ENCODE measurements at regions of chr21 and their contacts with region 1.

Region 1: DNA sequence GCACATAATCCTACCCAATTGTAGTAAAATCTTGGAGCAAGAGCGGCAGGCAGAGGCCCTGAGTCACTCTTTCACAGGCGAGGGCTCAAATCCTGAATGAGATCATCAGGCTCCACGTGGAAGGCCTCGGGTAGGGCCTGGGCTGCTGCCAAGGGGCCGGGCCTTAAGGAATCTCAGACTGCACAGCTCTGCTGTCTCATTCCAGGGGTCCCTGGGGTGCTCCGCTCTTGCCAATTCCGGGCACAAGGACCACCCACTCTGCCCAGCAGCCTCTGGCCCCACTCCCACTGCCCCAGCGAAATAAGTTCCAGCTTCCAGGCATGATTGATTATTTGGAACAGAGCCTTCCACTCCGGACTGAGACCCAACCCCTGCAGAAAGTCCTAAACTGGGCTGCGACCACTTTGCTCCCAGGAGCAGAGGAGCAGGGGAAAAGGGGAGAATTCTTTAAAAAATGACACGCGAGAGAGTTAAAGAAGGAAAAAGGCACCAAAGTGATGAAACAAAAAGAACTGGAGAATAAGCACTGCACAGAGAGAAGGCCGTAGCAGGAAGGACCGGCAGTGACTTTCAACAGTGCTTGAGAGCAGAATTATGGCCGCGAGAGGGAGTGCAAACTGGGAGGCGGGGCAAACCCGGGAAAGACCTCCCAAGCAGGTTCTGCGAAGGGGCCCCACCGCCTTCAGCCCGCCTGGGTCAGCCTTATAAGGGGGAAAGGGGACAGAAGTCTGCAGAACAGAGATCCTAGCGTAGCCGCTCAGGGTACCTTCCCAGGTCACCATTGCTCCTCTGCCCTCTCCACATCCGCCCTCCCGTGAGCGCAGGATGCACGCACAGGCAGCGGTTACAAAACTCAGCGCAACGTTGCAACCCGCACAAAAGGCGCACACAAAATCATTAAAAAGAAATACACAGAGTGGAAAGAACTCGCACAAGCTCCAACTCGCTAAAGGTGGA is 2.0 kb downstream of the ADAMTS1 start:
- DNase-seq: peak in 5 of 9 donors; percentile 16 to 55 (median 28)
- ATAC-seq: peak; percentile 62
- H3K4me3 ChIP-seq: peak overlapping the region; percentile 32
- H3K4me3 Mint-ChIP-seq: peak overlapping the region; percentile 75 to 89 (median 82)
- H3K27ac ChIP-seq: no peak overlapping the region
- H3K27ac Mint-ChIP-seq: peak overlapping the region in 3 of 9 donors; percentile 60 to 84 (median 69)
- H3K4me1 ChIP-seq: peaks cover 3 to 11% of the 10 kb centered on the region in 2 donors
- H3K4me1 Mint-ChIP-seq: peaks cover 32 to 49% (median 41%) of the 10 kb centered on the region in 7 donors
- H3K27me3 ChIP-seq: peaks cover 0 to 9% of the 10 kb centered on the region in 2 donors
- H3K27me3 Mint-ChIP-seq: peaks cover 66 to 87% (median 75%) of the 10 kb centered on the region in 5 donors

Region 2: GRCh38 chr21:26769613-26770188 is 73.6 kb before region 1 on chr21:
- CTCF ChIA-PET with region 1: no interaction called
- POLR2A ChIA-PET with region 1: no interaction called
- intact Hi-C with region 1: loop called in 1 of 2 experiments (anchors 2 kb)
- DNase-seq: peak in 2 of 9 donors; percentile 3 to 28
- ATAC-seq: no peak
- H3K4me3 ChIP-seq: no peak overlapping the region
- H3K4me3 Mint-ChIP-seq: no peak overlapping the region
- H3K27ac ChIP-seq: no peak overlapping the region
- H3K27ac Mint-ChIP-seq: no peak overlapping the region
- H3K4me1 ChIP-seq: no peaks in the 10 kb centered on the region
- H3K4me1 Mint-ChIP-seq: no peaks in the 10 kb centered on the region
- H3K27me3 ChIP-seq: no peaks in the 10 kb centered on the region
- H3K27me3 Mint-ChIP-seq: peaks cover 0 to 8% (median 3%) of the 10 kb centered on the region in 5 donors

Region 3: GRCh38 chr21:26918318-26919065 is 75.2 kb after region 1 on chr21:
- CTCF ChIA-PET with region 1: no interaction called
- POLR2A ChIA-PET with region 1: no interaction called
- intact Hi-C with region 1: no loop called
- DNase-seq: no peak
- ATAC-seq: no peak
- H3K4me3 ChIP-seq: no peak overlapping the region
- H3K4me3 Mint-ChIP-seq: no peak overlapping the region
- H3K27ac ChIP-seq: no peak overlapping the region
- H3K27ac Mint-ChIP-seq: no peak overlapping the region
- H3K4me1 ChIP-seq: no peaks in the 10 kb centered on the region
- H3K4me1 Mint-ChIP-seq: no peaks in the 10 kb centered on the region
- H3K27me3 ChIP-seq: no peaks in the 10 kb centered on the region
- H3K27me3 Mint-ChIP-seq: peaks cover 0 to 20% (median 9%) of the 10 kb centered on the region in 5 donors

Region 4: GRCh38 chr21:27564684-27565301 is 721.5 kb after region 1 on chr21:
- CTCF ChIA-PET with region 1: no interaction called
- POLR2A ChIA-PET with region 1: no interaction called
- intact Hi-C with region 1: loop called in 1 of 2 experiments (anchors 5 kb)
- DNase-seq: no peak
- ATAC-seq: no peak
- H3K4me3 ChIP-seq: no peak overlapping the region
- H3K4me3 Mint-ChIP-seq: no peak overlapping the region
- H3K27ac ChIP-seq: no peak overlapping the region
- H3K27ac Mint-ChIP-seq: no peak overlapping the region
- H3K4me1 ChIP-seq: no peaks in the 10 kb centered on the region
- H3K4me1 Mint-ChIP-seq: no peaks in the 10 kb centered on the region
- H3K27me3 ChIP-seq: no peaks in the 10 kb centered on the region
- H3K27me3 Mint-ChIP-seq: no peaks in the 10 kb centered on the region

Region 5: DNA sequence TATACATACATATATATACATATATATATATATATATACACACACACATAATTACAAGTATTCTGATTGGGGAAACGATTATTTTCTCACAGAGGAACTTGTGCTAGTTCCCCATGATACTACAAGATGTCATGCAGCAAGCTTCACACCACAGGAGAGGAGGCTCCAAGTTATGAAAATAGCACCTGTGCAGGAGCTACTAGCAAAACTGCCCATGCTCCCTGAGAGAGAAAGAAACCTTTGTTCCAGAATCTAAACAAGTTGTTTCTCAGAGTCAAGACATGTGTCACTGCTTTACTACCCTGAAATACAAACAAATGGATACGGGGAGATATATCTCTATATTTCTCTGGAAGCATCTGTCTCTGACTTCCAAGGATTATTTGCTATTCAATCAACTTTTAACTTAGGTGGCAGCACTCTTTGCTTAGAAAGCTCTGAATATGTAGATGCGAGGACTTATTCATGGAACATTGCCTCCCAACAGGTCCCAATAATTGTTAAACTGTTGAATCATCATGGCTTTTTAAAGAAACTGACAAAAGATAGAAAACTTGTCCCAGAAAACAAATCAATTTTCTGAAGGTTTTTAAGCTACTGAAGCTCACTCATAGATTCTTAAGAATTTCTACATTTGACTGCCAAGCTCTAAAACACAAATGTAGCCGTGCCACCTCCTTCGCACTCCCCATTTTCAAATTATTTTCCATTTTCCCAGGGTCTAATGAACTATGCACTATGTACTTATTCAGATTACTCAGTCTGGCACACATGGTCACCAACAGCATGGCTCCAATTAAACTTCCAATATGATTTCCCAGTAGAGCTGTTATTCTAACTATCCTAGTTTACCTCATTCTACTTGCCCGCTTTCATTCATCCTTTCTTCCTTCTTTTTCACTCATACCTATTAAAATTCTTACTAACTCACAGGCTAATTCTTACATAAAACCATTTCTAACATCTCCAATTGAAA is 1220.3 kb after region 1 on chr21:
- CTCF ChIA-PET with region 1: no interaction called
- POLR2A ChIA-PET with region 1: no interaction called
- intact Hi-C with region 1: loop called in 1 of 2 experiments (anchors 10 kb)
- DNase-seq: no peak
- ATAC-seq: no peak
- H3K4me3 ChIP-seq: no peak overlapping the region
- H3K4me3 Mint-ChIP-seq: no peak overlapping the region
- H3K27ac ChIP-seq: no peak overlapping the region
- H3K27ac Mint-ChIP-seq: no peak overlapping the region
- H3K4me1 ChIP-seq: no peaks in the 10 kb centered on the region
- H3K4me1 Mint-ChIP-seq: peaks cover 0 to 4% (median 0%) of the 10 kb centered on the region in 7 donors
- H3K27me3 ChIP-seq: no peaks in the 10 kb centered on the region
- H3K27me3 Mint-ChIP-seq: peaks cover 0 to 5% (median 0%) of the 10 kb centered on the region in 5 donors

Region 6: GRCh38 chr21:28336314-28336713 is 1493.1 kb after region 1 on chr21:
- CTCF ChIA-PET with region 1: no interaction called
- POLR2A ChIA-PET with region 1: no interaction called
- intact Hi-C with region 1: loop called (anchors 5 to 10 kb)
- DNase-seq: no peak
- ATAC-seq: no peak
- H3K4me3 ChIP-seq: no peak overlapping the region
- H3K4me3 Mint-ChIP-seq: no peak overlapping the region
- H3K27ac ChIP-seq: no peak overlapping the region
- H3K27ac Mint-ChIP-seq: no peak overlapping the region
- H3K4me1 ChIP-seq: no peaks in the 10 kb centered on the region
- H3K4me1 Mint-ChIP-seq: no peaks in the 10 kb centered on the region
- H3K27me3 ChIP-seq: no peaks in the 10 kb centered on the region
- H3K27me3 Mint-ChIP-seq: peaks cover 0 to 6% (median under 1%) of the 10 kb centered on the region in 5 donors

Region 7: GRCh38 chr21:28832013-28832714 is 1988.9 kb after region 1 on chr21:
- CTCF ChIA-PET with region 1: no interaction called
- POLR2A ChIA-PET with region 1: no interaction called
- intact Hi-C with region 1: loop called in 1 of 2 experiments (anchors 10 kb)
- DNase-seq: peak in 6 of 9 donors; percentile 29 to 64 (median 52)
- ATAC-seq: peak; percentile 91
- H3K4me3 ChIP-seq: peak overlapping the region; percentile 21
- H3K4me3 Mint-ChIP-seq: peak overlapping the region; percentile 12 to 75 (median 68)
- H3K27ac ChIP-seq: no peak overlapping the region
- H3K27ac Mint-ChIP-seq: peak overlapping the region; percentile 2 to 97 (median 68)
- H3K4me1 ChIP-seq: peaks cover 52 to 56% of the 10 kb centered on the region in 2 donors
- H3K4me1 Mint-ChIP-seq: peaks cover 46 to 82% (median 76%) of the 10 kb centered on the region in 7 donors
- H3K27me3 ChIP-seq: no peaks in the 10 kb centered on the region
- H3K27me3 Mint-ChIP-seq: no peaks in the 10 kb centered on the region